ENCODE measurements at regions of chr2 and their contacts with region 1.

Region 1: GRCh38 chr2:64595397-64596160 is 58.1 kb downstream of the SERTAD2 start:
- DNase-seq: peak in 1 of 2 experiments; percentile 26
- H3K4me3 ChIP-seq: no peak overlapping the region
- H3K4me3 Mint-ChIP-seq: no peak overlapping the region
- H3K27ac Mint-ChIP-seq: no peak overlapping the region
- H3K4me1 ChIP-seq: no peaks in the 10 kb centered on the region
- H3K4me1 Mint-ChIP-seq: no peaks in the 10 kb centered on the region
- H3K27me3 ChIP-seq: no peaks in the 10 kb centered on the region
- H3K27me3 Mint-ChIP-seq: no peaks in the 10 kb centered on the region
- CTCF ChIP-seq: peak in 1 of 2 experiments; percentile 58

Region 2: GRCh38 chr2:64873472-64873924 is 277.9 kb after region 1 on chr2:
- CTCF ChIA-PET with region 1: interaction called, 5 read pairs
- POLR2A ChIA-PET with region 1: no interaction called
- intact Hi-C with region 1: loop called (anchors 1 kb)
- DNase-seq: peak; percentile 78 to 91
- H3K4me3 ChIP-seq: no peak overlapping the region
- H3K4me3 Mint-ChIP-seq: no peak overlapping the region
- H3K27ac Mint-ChIP-seq: no peak overlapping the region
- H3K4me1 ChIP-seq: peaks cover 14% of the 10 kb centered on the region; the same call in 1 of the 2 replicates
- H3K4me1 Mint-ChIP-seq: peaks cover 14% of the 10 kb centered on the region
- H3K27me3 ChIP-seq: no peaks in the 10 kb centered on the region
- H3K27me3 Mint-ChIP-seq: no peaks in the 10 kb centered on the region
- CTCF ChIP-seq: peak; percentile 91 to 96